Activated B cell treated with CpG ODN at 0.5 μM for 24 hours (primary cell): ENCODE measurements at regions of chr12 and their contacts with region 1.

Region 1: DNA sequence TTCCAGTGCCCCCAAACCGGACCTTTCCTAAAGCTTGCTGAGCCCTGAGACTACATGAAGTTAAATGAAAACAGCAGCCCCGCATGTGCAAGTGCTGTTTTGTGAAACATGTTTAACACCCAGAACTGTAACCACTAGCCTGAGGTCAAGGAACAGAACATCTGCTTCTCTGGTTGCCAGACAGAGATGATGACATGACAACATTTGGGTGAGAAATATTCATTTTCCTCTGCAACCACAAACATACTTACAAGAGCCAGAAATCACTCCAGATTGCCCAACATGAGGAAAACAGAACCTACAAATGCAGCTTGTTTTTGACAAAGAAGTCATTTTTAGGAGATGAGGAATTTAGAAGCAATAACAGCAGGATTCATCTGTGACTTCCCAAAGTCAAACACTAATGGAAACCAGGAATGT is 110.4 kb downstream of the BCAT1 start:
- DNase-seq: no peak
- ATAC-seq: no peak
- H3K4me3 Mint-ChIP-seq: no peak overlapping the region
- H3K27ac Mint-ChIP-seq: peak overlapping the region; percentile 24
- H3K4me1 Mint-ChIP-seq: peaks cover 23% of the 10 kb centered on the region
- H3K27me3 Mint-ChIP-seq: no peaks in the 10 kb centered on the region
- CTCF ChIP-seq: no peak

Region 2: DNA sequence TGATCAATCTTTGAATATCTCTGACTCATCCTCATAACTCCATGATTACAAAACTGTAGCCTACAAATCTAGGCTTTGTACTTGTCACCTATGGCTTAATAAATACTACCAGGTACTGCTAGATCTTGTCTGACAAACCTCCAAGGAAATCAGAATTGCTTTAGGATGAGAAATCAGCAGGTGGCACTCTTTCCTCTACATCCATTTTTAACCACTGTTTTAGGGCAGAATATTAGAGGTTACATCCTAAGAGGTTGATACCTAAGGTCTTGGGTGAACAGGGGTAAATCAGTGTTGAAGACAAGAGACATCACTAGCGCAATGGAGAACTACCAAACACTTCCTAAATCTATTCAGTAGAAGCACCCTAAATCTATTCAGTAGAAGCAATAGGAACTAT is 826.0 kb before region 1 on chr12:
- CTCF ChIA-PET with region 1: no interaction called
- POLR2A ChIA-PET with region 1: no interaction called
- intact Hi-C with region 1: loop called (anchors 1 kb)
- DNase-seq: no peak
- ATAC-seq: no peak
- H3K4me3 Mint-ChIP-seq: no peak overlapping the region
- H3K27ac Mint-ChIP-seq: no peak overlapping the region
- H3K4me1 Mint-ChIP-seq: no peaks in the 10 kb centered on the region
- H3K27me3 Mint-ChIP-seq: no peaks in the 10 kb centered on the region
- CTCF ChIP-seq: no peak

Region 3: DNA sequence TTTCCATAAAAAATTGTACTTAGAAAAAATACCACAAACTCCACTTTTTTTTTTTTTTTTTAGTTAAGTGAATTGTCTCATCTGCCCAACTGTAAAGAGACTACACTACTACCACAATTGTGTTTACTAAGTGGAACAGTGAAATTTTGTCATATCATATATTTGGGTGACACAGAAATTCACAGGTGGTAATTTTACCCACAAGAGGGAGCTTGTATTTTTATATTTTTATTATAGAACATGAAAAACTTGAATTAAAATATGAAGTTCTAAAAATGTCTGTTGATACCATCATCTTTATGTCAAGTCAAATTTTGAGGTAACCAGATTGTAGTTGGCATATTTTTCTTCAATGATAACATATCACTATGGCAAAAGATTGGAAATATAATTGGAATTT is 559.7 kb before region 1 on chr12:
- CTCF ChIA-PET with region 1: no interaction called
- POLR2A ChIA-PET with region 1: no interaction called
- intact Hi-C with region 1: loop called (anchors 5 kb)
- DNase-seq: no peak
- ATAC-seq: no peak
- H3K4me3 Mint-ChIP-seq: no peak overlapping the region
- H3K27ac Mint-ChIP-seq: no peak overlapping the region
- H3K4me1 Mint-ChIP-seq: no peaks in the 10 kb centered on the region
- H3K27me3 Mint-ChIP-seq: no peaks in the 10 kb centered on the region
- CTCF ChIP-seq: no peak

Region 4: DNA sequence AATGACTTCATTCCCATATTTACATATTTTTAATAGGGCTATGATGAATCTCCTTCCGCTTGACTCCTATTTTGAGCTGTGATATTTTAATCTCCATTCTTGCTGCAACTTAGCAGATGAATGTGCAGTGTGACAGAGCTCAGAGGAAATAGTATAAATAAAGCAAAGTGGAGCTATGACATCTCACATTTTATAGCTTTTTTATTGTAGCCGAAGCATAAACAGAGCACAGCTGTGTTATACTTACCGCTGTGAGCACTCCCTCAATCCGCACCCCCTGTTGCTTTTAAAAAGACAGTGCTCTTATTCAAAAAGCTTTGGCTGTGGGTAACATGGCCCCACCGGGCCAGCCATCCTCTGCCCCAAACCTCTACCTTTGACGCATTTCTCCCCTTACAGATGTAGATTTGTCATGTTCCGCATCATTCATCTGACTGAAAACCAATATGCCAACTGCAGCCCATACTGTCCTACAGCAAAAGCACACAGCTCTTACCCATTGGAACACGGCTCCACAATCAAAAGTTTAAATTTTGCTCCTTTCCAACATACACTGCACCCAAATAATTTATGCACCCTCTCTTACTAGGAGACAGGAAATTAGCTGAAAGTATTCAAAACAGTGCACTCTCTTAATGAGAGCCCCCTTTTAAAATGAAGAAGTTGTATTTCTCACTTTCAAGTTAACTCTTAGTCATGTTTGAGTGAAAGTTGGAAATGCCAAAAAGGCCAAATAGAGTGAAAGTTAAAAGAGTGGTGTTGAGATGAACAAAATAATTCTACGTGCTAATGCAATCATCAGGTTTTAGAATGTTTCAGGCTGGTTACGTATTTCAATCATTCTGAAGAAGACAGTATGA is 459.8 kb before region 1 on chr12:
- CTCF ChIA-PET with region 1: no interaction called
- POLR2A ChIA-PET with region 1: no interaction called
- intact Hi-C with region 1: loop called (anchors 5 kb)
- DNase-seq: peak; percentile 26
- ATAC-seq: peak; percentile 76
- H3K4me3 Mint-ChIP-seq: peak overlapping the region; percentile 84
- H3K27ac Mint-ChIP-seq: peak overlapping the region; percentile 95
- H3K4me1 Mint-ChIP-seq: peaks cover 40% of the 10 kb centered on the region
- H3K27me3 Mint-ChIP-seq: no peaks in the 10 kb centered on the region
- CTCF ChIP-seq: no peak

Region 5: DNA sequence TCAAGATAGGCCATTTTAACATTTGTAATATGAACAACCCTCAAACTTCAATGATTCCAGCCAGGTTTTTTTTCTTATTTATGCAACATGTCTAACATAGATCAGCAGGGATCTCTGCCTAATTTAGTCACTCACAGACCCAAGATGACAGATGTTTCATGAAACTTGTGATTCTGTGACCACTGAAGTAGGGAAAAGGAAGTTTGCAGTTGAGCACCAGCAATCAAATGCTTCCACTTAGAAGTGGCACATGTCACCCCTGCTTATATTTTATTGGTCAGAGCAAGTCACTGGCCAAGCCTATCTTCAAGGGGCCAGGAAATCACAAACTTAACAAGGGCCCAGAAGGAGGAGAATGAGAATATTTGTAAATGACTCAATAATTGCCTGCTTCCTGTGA is 40.2 kb before region 1 on chr12:
- CTCF ChIA-PET with region 1: interaction called, 3 read pairs
- POLR2A ChIA-PET with region 1: no interaction called
- intact Hi-C with region 1: loop called (anchors 5 kb)
- DNase-seq: no peak
- ATAC-seq: peak; percentile 86
- H3K4me3 Mint-ChIP-seq: peak overlapping the region; percentile 5
- H3K27ac Mint-ChIP-seq: peak overlapping the region; percentile 77
- H3K4me1 Mint-ChIP-seq: peaks cover 44% of the 10 kb centered on the region
- H3K27me3 Mint-ChIP-seq: no peaks in the 10 kb centered on the region
- CTCF ChIP-seq: no peak